A673 (cell line): ENCODE measurements at regions of chr2 and their contacts with region 1.

Region 1: GRCh38 chr2:148644883-148645538 is 460 bp downstream of the EPC2 start:
- DNase-seq: peak; percentile 96
- H3K4me3 ChIP-seq: peak overlapping the region; percentile 80
- H3K27ac ChIP-seq: peak overlapping the region; percentile 91
- H3K4me1 ChIP-seq: peaks cover 5% of the 10 kb centered on the region
- H3K27me3 ChIP-seq: no peaks in the 10 kb centered on the region
- CTCF ChIP-seq: peak; percentile 31; the same call in 1 of the 2 replicates

Region 2: DNA sequence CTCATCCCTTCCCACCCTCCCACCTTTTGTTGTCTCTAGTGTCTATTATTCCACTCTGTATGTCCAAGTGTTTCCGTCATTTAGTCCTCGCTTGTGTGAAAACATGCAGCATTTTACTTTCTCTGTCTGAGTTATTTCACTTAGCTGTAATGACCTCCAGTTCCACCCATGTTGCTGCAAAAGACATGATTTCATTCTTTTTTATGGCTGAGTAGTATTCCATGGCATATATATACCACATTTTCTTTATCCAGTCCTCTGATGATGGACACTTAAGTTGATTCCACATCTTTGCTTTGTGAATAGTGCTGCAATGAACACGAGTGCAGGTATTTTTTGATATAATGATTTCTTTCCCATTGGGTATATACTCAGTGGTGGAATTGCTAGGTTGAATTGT is 327.4 kb before region 1 on chr2:
- CTCF ChIA-PET with region 1: no interaction called
- POLR2A ChIA-PET with region 1: no interaction called
- intact Hi-C with region 1: no loop called
- DNase-seq: no peak
- H3K4me3 ChIP-seq: no peak overlapping the region
- H3K27ac ChIP-seq: no peak overlapping the region
- H3K4me1 ChIP-seq: no peaks in the 10 kb centered on the region
- H3K27me3 ChIP-seq: no peaks in the 10 kb centered on the region
- CTCF ChIP-seq: no peak

Region 3: DNA sequence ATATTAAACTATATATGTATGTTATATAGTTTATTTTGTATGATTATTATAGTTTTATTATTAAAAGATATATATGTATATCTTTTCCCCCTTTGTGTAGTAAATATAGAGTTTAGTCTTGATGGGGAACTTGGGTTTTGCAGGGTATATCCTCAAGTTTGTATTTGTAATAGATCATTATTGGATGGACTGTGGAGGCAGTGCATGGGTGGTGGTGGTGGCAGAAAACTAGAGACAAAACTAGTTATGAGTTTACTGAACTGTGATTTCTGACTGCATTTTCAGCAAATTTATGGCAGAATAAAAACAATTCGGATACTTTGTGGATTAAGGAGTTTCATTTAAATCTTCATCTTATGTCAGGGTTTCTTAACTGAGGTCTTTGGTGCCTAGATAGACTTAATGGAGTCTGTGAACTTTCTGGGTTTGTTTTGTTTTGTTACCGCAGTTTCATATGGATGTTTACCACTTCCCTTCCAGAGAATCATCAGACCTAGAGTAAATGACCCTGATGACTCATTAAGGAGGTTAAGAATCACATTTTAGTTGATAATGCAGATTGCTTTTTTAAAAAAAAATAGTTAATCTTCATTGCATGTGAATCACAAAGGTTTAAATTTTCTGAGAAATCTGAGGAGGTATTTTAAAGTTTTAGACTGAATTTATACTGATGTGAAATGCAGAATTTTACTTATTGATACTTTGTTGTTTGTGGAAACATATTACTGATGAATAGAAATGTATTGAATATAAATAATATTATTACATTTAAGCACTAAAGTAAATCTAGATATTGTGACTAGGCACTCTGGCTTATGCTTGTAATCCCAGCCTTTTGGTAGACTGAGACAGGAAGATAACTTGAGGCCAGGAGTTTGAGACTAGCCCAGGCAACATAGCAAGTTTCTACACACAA is 14.1 kb after region 1 on chr2:
- CTCF ChIA-PET with region 1: interaction called, 5 read pairs
- POLR2A ChIA-PET with region 1: interaction called, 16 read pairs
- intact Hi-C with region 1: loop called (anchors 2 kb)
- DNase-seq: peak; percentile 24
- H3K4me3 ChIP-seq: no peak overlapping the region
- H3K27ac ChIP-seq: peak overlapping the region; percentile 37
- H3K4me1 ChIP-seq: peaks cover 43% of the 10 kb centered on the region
- H3K27me3 ChIP-seq: no peaks in the 10 kb centered on the region
- CTCF ChIP-seq: no peak

Region 4: GRCh38 chr2:148764815-148765214 is 119.8 kb after region 1 on chr2:
- CTCF ChIA-PET with region 1: interaction called, 23 read pairs
- POLR2A ChIA-PET with region 1: no interaction called
- intact Hi-C with region 1: no loop called
- DNase-seq: no peak
- H3K4me3 ChIP-seq: no peak overlapping the region
- H3K27ac ChIP-seq: no peak overlapping the region
- H3K4me1 ChIP-seq: no peaks in the 10 kb centered on the region
- H3K27me3 ChIP-seq: no peaks in the 10 kb centered on the region
- CTCF ChIP-seq: no peak